GM12878 (cell line): ENCODE measurements at regions of chr22 and their contacts with region 1.

Region 1: GRCh38 chr22:28882878-28883656 is at the start of gene ZNRF3:
- DNase-seq: no peak
- ATAC-seq: peak; percentile 89
- H3K4me3 ChIP-seq: peak within 1 kb of the TSS; percentile 57; the same call in 1 of the 2 replicates
- H3K27ac ChIP-seq: no peak within 1 kb of the TSS
- H3K4me1 ChIP-seq: no peaks in the 10 kb centered on the region
- H3K27me3 ChIP-seq: peaks cover 0 to 5% of the 10 kb centered on the region in 2 experiments; a peak in 1 of 4 replicates
- CTCF ChIP-seq: no peak
- EP300 ChIP-seq: no peak
- POLR2A ChIP-seq: peak; percentile 50; the same call in 1 of the 2 replicates
- RAD21 ChIP-seq: no peak
- polyA plus RNA-seq, gene ZNRF3: 0.10 to 0.13 TPM

Region 2: DNA sequence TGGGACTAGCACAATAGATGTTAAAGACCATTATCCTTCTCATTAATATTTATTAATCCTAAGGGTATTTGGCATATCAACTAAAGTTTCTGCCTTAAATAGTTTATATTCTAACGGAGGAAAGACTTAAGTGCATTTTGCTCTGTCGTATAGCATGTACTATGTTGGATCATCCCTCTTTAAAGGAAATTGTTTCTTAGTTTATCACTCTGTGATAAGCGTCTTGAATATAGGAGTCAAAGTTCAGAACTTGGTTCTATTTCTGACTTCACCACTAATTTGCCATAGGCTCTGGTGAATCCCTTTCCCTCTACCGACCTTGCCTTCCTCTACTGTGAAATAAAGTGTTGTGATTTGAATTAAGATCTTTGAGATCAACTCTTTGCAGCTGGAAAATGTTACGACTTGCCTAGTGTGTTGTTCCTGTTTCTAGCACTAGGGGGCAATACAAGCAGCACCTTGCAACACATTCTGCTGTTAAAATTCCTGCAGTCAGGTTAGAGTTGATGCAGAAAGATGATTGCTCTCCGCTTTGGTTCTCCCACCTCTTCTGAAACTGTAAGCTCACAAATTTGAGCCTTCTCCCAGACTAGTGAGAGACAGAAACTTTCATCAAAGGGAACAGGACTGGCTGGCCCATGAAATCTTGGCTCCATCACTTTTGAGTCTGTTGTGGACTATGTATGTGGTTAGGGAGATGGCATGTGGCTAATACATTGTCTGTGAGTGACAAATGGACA is 27.5 kb before region 1 on chr22:
- CTCF ChIA-PET with region 1: interaction called, 12 read pairs
- POLR2A ChIA-PET with region 1: interaction called, 3 read pairs
- RAD21 ChIA-PET with region 1: interaction called, 5 read pairs
- SMC1A ChIA-PET with region 1: interaction called, 10 read pairs
- in situ Hi-C with region 1: no loop called
- intact Hi-C with region 1: no loop called
- DNase-seq: peak; percentile 27
- ATAC-seq: peak; percentile 79
- H3K4me3 ChIP-seq: no peak overlapping the region
- H3K27ac ChIP-seq: no peak overlapping the region
- H3K4me1 ChIP-seq: no peaks in the 10 kb centered on the region
- H3K27me3 ChIP-seq: no peaks in the 10 kb centered on the region; a peak in 1 of 4 replicates
- CTCF ChIP-seq: peak; percentile 85 to 90 (median 87); a peak in 5 of 6 replicates
- EP300 ChIP-seq: no peak
- POLR2A ChIP-seq: no peak
- RAD21 ChIP-seq: peak; percentile 94

Region 3: GRCh38 chr22:28899199-28899853 is 16.3 kb after region 1 on chr22:
- CTCF ChIA-PET with region 1: interaction called, 5 read pairs
- POLR2A ChIA-PET with region 1: interaction called, 11 read pairs
- RAD21 ChIA-PET with region 1: interaction called, 58 read pairs
- SMC1A ChIA-PET with region 1: interaction called, 48 read pairs
- in situ Hi-C with region 1: no loop called
- intact Hi-C with region 1: no loop called
- DNase-seq: no peak
- ATAC-seq: peak; percentile 77
- H3K4me3 ChIP-seq: no peak overlapping the region
- H3K27ac ChIP-seq: no peak overlapping the region
- H3K4me1 ChIP-seq: no peaks in the 10 kb centered on the region
- H3K27me3 ChIP-seq: no peaks in the 10 kb centered on the region; a peak in 2 of 4 replicates
- CTCF ChIP-seq: no peak
- EP300 ChIP-seq: no peak
- POLR2A ChIP-seq: no peak
- RAD21 ChIP-seq: no peak

Region 4: GRCh38 chr22:28904211-28904896 is 21.3 kb after region 1 on chr22:
- CTCF ChIA-PET with region 1: interaction called, 5 read pairs
- POLR2A ChIA-PET with region 1: interaction called, 11 read pairs
- RAD21 ChIA-PET with region 1: interaction called, 58 read pairs
- SMC1A ChIA-PET with region 1: interaction called, 48 read pairs
- in situ Hi-C with region 1: no loop called
- intact Hi-C with region 1: loop called (anchors 1 kb)
- DNase-seq: no peak
- ATAC-seq: no peak
- H3K4me3 ChIP-seq: no peak overlapping the region
- H3K27ac ChIP-seq: no peak overlapping the region
- H3K4me1 ChIP-seq: peaks cover 23% of the 10 kb centered on the region
- H3K27me3 ChIP-seq: no peaks in the 10 kb centered on the region; a peak in 1 of 4 replicates
- CTCF ChIP-seq: no peak
- EP300 ChIP-seq: no peak
- POLR2A ChIP-seq: no peak
- RAD21 ChIP-seq: no peak

Region 5: DNA sequence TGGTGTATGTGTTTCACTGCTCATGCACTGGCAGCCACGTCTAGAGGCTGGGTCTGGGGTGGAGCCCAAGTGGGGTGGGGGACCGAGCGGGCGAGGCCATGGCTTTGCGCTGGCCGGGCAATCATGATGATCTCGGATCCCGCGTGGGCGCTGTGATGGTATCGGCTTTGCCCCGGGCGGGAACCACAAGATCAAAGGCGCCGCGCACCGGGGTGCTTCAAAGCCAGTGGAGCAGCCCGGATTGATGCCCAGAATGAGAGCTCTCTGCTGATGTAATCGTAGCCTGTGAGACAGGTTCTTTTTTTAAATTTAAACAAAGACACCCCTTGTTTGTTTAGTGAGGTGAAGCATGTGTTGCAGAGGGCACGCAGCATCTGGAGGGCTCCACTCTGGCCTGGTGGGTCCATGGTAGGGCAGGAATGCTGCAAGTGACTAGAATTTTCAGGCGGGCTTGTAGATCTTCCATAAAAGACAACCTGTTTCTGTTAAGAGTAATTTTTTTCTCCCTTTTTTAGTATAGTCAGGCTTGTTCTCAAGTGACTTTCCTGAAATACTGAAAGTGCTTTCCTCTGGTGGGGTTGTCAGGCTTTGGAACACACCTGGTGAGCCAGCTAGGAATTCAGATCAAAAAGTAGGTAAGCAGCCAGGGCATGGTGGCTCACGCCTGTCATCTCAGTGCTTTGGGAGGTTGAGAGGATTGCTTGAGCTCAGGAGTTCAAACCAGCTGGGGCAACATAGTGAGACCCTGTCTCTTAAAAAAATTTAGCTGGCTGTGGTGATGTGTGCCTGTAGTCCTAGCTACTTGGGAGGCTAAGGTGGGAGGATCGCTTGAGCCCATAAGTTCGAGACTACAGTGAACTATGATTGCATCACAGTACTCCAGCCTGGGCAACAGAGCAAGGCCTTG is 41.0 kb after region 1 on chr22:
- CTCF ChIA-PET with region 1: interaction called, 5 read pairs
- POLR2A ChIA-PET with region 1: interaction called, 5 read pairs
- RAD21 ChIA-PET with region 1: interaction called, 65 read pairs
- SMC1A ChIA-PET with region 1: interaction called, 21 read pairs
- in situ Hi-C with region 1: no loop called
- intact Hi-C with region 1: no loop called
- DNase-seq: no peak
- ATAC-seq: no peak
- H3K4me3 ChIP-seq: no peak overlapping the region
- H3K27ac ChIP-seq: no peak overlapping the region
- H3K4me1 ChIP-seq: peaks cover 8% of the 10 kb centered on the region
- H3K27me3 ChIP-seq: 0 out of 4 replicates have a peak, but pooled peaks cover 0 to 1% of the 10 kb centered on the region in 2 experiments
- CTCF ChIP-seq: no peak
- EP300 ChIP-seq: no peak
- POLR2A ChIP-seq: no peak
- RAD21 ChIP-seq: no peak

Region 6: DNA sequence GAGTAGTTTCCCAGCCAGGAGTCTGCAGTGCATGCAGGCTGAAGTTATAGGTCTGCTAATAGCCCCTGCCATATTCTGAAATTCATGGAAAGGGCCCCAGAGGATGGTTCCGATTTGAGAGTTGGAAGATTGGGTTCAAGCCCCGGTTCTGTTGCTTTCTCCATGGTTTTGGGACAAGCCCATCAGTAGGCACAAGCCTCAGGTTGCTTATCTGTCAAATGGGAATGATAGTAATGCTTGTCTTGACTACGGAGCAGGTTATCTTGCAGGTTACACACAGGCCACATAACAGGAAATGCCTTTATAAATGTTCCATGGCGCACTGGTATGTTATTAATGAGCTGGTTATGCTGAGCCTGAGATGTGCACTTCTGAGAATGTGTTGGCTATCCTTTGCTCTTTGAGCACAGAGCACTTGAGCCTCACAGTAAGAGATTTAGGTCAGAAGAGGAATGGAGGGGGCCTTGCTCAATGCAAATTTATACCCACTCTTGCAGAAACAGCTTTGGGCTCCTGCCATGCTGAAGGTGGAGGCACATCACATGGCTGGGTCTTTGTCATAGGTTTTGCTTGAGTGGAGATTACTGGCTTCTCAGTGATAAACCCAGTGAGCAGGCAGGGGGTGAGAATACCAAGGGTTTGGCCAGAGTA is 47.4 kb after region 1 on chr22:
- CTCF ChIA-PET with region 1: interaction called, 5 read pairs
- POLR2A ChIA-PET with region 1: interaction called, 10 read pairs
- RAD21 ChIA-PET with region 1: interaction called, 4 read pairs
- SMC1A ChIA-PET with region 1: interaction called, 17 read pairs
- in situ Hi-C with region 1: no loop called
- intact Hi-C with region 1: no loop called
- DNase-seq: no peak
- ATAC-seq: peak; percentile 84
- H3K4me3 ChIP-seq: no peak overlapping the region
- H3K27ac ChIP-seq: no peak overlapping the region
- H3K4me1 ChIP-seq: no peaks in the 10 kb centered on the region; the same call in 1 of the 2 replicates
- H3K27me3 ChIP-seq: peaks cover 0 to 6% of the 10 kb centered on the region in 2 experiments; a peak in 1 of 4 replicates
- CTCF ChIP-seq: no peak
- EP300 ChIP-seq: no peak
- POLR2A ChIP-seq: no peak
- RAD21 ChIP-seq: no peak

Region 7: DNA sequence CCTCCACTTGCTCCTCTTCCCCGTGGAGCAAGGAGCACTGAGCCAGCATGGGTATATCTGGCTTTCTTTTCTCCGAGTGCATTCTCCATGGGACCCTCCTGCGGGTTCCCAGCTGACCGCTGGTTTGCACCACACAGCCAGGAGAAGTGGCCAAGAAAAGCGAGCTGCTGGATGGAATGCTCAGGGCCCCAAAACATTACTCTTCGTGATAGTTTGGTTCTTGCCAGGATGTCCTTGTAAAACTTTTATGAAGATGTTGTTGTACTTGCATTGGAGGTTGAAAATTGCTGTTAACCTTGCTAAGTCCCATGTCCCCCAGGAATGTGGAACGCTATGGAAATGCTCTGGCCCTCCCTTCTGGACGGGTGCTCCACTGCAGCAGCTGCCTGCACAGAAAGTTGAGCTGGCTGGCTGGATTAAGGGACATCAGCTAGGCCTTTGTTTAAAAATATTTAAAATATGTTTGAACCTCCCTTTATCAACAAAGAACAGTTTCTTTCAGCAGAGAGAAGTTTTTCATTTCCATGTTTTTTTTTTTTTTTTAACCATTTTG is 69.0 kb after region 1 on chr22:
- CTCF ChIA-PET with region 1: no interaction called
- POLR2A ChIA-PET with region 1: no interaction called
- RAD21 ChIA-PET with region 1: interaction called, 3 read pairs
- SMC1A ChIA-PET with region 1: no interaction called
- in situ Hi-C with region 1: no loop called
- intact Hi-C with region 1: loop called (anchors 5 kb)
- DNase-seq: no peak
- ATAC-seq: no peak
- H3K4me3 ChIP-seq: no peak overlapping the region
- H3K27ac ChIP-seq: no peak overlapping the region
- H3K4me1 ChIP-seq: peaks cover 17% of the 10 kb centered on the region
- H3K27me3 ChIP-seq: peaks cover 0 to 2% of the 10 kb centered on the region in 2 experiments; a peak in 1 of 4 replicates
- CTCF ChIP-seq: no peak
- EP300 ChIP-seq: no peak
- POLR2A ChIP-seq: no peak
- RAD21 ChIP-seq: no peak